ENCODE measurements at regions of chr6 and their contacts with region 1.

Region 1: DNA sequence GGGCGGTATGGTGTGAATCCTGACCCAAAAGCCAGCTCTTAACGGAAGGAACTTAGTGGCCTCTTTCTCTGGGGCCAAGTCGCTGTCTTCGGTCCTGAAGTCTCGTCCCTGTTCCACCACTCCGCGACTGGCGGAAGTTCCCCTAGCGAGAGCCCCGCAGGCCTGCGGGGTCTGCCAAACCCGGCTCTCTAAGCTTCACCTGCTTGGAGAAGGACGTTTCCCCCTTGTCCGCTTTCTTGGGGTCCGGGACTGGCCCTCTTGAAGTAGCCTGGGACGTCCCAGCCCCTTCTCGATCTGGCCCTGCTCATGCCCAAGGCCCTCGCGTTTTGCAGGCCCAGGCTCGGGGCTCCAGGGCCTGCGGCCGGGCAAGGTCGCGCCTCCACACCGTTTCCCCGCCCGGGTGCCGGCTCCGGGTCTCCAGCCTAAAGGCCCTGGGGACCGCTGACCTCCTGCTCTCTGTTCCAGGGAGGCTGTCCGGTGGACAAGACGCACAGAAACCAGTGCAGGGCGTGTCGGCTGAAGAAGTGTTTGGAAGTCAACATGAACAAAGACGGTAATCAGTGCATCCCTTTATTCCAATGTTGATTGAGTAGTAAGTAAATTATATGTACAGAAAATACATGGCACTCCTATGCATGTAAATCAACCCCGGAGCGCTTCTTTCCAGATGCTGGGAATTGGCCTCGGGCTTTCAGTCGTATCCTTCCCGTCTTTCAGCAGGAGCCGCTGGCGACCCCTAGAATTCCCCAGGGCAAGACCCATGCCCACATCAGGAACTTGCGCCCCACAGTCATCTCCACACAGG is 8.8 kb downstream of the NR2E1 start:
- DNase-seq: peak; percentile 82
- ATAC-seq: peak; percentile 53
- H3K4me3 Mint-ChIP-seq: peak overlapping the region; percentile 72
- H3K27ac Mint-ChIP-seq: no peak overlapping the region
- H3K4me1 Mint-ChIP-seq: peaks cover 60% of the 10 kb centered on the region
- H3K27me3 Mint-ChIP-seq: peaks cover 99% of the 10 kb centered on the region
- CTCF ChIP-seq: no peak

Region 2: GRCh38 chr6:108013787-108014439 is 160.7 kb before region 1 on chr6:
- CTCF ChIA-PET with region 1: no interaction called
- POLR2A ChIA-PET with region 1: no interaction called
- DNase-seq: no peak
- ATAC-seq: no peak
- H3K4me3 Mint-ChIP-seq: no peak overlapping the region
- H3K27ac Mint-ChIP-seq: no peak overlapping the region
- H3K4me1 Mint-ChIP-seq: no peaks in the 10 kb centered on the region
- H3K27me3 Mint-ChIP-seq: peaks cover 12% of the 10 kb centered on the region
- CTCF ChIP-seq: no peak

Region 3: DNA sequence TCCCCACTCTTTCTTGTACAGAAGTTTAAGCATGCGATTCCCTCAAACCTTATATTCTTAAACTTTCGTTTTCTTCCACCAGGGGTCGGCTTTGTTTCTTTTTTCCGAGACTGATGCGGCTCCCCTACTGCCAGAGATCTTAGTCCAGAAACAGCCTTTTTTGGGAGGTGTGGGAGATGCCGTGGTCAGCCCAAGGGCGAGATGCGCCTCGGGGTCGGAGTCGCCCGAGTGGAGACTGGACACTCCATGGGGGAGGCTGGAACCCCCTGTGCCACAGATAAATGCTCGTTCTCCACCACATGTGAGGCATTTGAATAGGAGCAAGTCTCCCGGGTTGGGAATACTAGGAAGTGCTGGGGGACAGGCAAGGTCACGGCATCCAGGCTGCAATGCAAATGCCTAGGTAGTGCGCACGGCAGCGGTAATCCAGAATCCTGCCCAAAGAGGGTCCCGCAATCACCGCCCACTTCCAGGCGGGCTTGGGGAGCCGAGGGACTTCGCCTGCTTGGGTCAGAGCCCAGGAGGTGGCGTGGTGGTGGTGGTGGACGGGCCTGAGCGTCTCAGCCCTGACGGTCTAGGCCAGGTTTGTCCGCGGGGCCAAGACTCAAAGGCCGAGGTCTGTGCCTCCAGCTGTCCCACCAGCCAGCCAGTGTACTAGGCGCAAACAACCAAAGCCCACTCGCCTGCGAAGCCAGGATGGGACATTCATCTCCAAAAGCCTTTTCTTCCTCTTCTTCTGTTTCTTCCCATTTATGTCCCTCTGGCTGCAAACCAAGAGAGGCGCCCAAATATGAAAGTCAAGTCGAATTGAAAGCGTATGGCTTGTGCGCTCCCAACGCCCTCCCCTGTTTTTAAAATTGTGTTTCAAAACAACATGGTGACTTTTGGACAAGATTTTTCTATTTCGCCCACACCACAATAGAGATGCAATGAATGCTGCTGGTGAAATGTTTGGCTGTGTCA is 60.7 kb before region 1 on chr6:
- CTCF ChIA-PET with region 1: interaction called, 42 read pairs
- POLR2A ChIA-PET with region 1: interaction called, 7 read pairs
- DNase-seq: peak; percentile 67
- ATAC-seq: peak; percentile 49
- H3K4me3 Mint-ChIP-seq: peak overlapping the region; percentile 63
- H3K27ac Mint-ChIP-seq: no peak overlapping the region
- H3K4me1 Mint-ChIP-seq: peaks cover 39% of the 10 kb centered on the region
- H3K27me3 Mint-ChIP-seq: peaks cover 96% of the 10 kb centered on the region
- CTCF ChIP-seq: no peak; the same call in 1 of the 2 replicates

Region 4: GRCh38 chr6:108163267-108163643 is 11.3 kb before region 1 on chr6:
- CTCF ChIA-PET with region 1: interaction called, 17 read pairs
- POLR2A ChIA-PET with region 1: interaction called, 5 read pairs
- DNase-seq: no peak
- ATAC-seq: peak; percentile 9
- H3K4me3 Mint-ChIP-seq: peak overlapping the region; percentile 64; the same call in 1 of the 2 replicates
- H3K27ac Mint-ChIP-seq: no peak overlapping the region
- H3K4me1 Mint-ChIP-seq: peaks cover 54% of the 10 kb centered on the region
- H3K27me3 Mint-ChIP-seq: peaks cover 100% of the 10 kb centered on the region
- CTCF ChIP-seq: no peak

Region 5: DNA sequence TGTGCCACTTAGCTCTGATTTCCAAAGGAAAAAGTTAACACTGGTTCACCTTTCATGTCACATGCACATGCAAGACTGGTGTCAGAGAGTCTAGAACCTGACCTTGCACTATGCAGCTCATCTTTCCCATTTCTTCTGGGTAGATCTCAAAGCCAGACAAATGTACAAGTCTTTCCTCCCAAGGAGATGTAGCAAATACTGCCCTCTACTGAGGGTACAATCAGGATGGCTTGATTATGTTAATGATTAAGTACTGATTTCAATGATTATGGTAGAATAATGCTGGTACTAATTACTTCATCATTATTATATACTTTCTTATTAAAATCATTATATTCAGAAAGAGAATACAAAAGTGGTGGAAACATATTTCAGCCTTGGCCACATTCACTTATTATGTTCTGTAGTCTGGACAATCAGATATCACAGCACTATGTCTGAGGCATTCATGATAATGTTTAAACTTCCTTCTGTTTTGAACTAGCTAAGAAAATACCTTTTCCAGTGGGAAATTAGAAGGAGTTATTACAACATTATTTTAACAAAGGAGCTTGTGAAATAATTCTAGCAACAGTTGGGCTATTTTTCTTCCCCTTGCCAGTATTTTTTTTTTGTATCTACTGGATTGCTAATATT is 317.7 kb after region 1 on chr6:
- CTCF ChIA-PET with region 1: interaction called, 53 read pairs
- POLR2A ChIA-PET with region 1: no interaction called
- DNase-seq: no peak
- ATAC-seq: no peak; the same call in 1 of the 2 replicates
- H3K4me3 Mint-ChIP-seq: no peak overlapping the region
- H3K27ac Mint-ChIP-seq: no peak overlapping the region
- H3K4me1 Mint-ChIP-seq: no peaks in the 10 kb centered on the region
- H3K27me3 Mint-ChIP-seq: no peaks in the 10 kb centered on the region
- CTCF ChIP-seq: no peak

Region 6: GRCh38 chr6:108497883-108498282 is 323.3 kb after region 1 on chr6:
- CTCF ChIA-PET with region 1: interaction called, 53 read pairs
- POLR2A ChIA-PET with region 1: no interaction called
- DNase-seq: peak; percentile 58
- ATAC-seq: peak; percentile 97
- H3K4me3 Mint-ChIP-seq: no peak overlapping the region
- H3K27ac Mint-ChIP-seq: no peak overlapping the region
- H3K4me1 Mint-ChIP-seq: peaks cover 12% of the 10 kb centered on the region
- H3K27me3 Mint-ChIP-seq: no peaks in the 10 kb centered on the region
- CTCF ChIP-seq: peak; percentile 34; the same call in 1 of the 2 replicates

Region 7: DNA sequence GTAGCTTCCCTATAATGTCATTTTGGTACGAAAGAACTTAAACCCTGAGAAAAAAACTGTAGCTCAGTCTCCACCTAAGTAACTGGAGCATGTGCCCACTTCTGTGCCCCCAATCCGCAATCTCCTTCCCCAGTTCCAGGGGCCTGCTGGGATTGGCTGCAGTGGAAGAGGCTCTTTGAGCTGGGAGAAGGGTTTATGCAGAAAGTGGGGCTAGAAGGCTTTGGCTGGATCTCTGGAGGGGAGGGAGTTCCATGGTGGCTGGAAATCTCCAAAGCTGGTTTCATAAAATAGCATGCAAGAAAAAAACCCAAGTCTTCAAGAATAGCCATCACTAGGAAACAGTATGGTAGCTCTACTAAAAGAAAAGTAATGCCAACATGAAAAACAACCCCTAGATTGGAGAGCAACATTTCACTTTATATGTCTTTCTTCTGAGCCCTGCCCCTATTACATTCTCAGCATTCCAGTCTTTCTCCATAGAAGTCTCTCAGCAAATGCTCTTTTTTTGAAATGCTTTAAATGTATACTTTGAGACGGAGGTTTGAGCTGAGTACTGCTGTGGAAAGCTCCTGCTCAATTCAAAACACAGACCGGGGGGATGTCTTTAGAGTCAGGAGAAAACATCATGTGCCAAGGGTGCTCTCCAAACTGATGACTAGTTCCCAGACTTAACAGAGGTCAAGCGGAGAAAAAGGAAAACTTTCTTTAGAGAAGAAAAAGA is 350.1 kb after region 1 on chr6:
- CTCF ChIA-PET with region 1: interaction called, 23 read pairs
- POLR2A ChIA-PET with region 1: no interaction called
- DNase-seq: no peak
- ATAC-seq: peak; percentile 80
- H3K4me3 Mint-ChIP-seq: no peak overlapping the region
- H3K27ac Mint-ChIP-seq: peak overlapping the region; percentile 55
- H3K4me1 Mint-ChIP-seq: peaks cover 14% of the 10 kb centered on the region
- H3K27me3 Mint-ChIP-seq: no peaks in the 10 kb centered on the region
- CTCF ChIP-seq: no peak